ENCODE measurements at regions of chrX and their contacts with region 1.

Region 1: GRCh38 chrX:123833387-123833786 is 26.5 kb upstream of the XIAP start:
- DNase-seq: peak; percentile 63 to 73
- H3K4me3 ChIP-seq: no peak overlapping the region
- H3K4me3 Mint-ChIP-seq: no peak overlapping the region
- H3K27ac Mint-ChIP-seq: no peak overlapping the region
- H3K4me1 ChIP-seq: no peaks in the 10 kb centered on the region
- H3K4me1 Mint-ChIP-seq: peaks cover 6% of the 10 kb centered on the region
- H3K27me3 ChIP-seq: no peaks in the 10 kb centered on the region
- H3K27me3 Mint-ChIP-seq: no peaks in the 10 kb centered on the region
- CTCF ChIP-seq: peak; percentile 52 to 63

Region 2: DNA sequence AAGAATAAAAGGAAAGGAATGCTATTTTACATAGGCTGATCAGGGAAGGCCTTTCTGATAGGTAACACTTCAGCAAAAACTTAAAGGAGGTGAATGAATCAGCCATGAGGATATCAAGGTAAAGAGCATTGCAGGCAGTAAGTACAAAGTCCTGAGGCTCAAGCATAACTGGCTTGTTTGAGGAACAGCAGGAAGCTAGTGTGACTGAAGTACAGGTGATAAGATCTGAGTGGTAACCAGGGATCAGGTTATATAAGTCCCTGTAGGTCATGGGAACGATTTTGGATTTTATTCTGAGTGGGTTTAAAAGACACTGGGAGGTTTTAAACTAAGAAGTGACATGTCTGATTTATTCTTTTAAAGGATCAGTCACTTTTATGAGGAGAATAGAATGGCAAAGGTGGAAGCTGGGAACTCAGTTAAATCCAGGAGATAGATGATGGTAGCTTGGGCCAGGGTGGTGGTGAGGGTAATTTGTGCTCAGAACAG is 53.4 kb before region 1 on chrX:
- CTCF ChIA-PET with region 1: interaction called, 12 read pairs
- POLR2A ChIA-PET with region 1: no interaction called
- intact Hi-C with region 1: no loop called
- DNase-seq: peak; percentile 65 to 71
- H3K4me3 ChIP-seq: no peak overlapping the region
- H3K4me3 Mint-ChIP-seq: peak overlapping the region; percentile 58
- H3K27ac Mint-ChIP-seq: peak overlapping the region; percentile 96
- H3K4me1 ChIP-seq: peaks cover 32% of the 10 kb centered on the region
- H3K4me1 Mint-ChIP-seq: peaks cover 13% of the 10 kb centered on the region
- H3K27me3 ChIP-seq: no peaks in the 10 kb centered on the region
- H3K27me3 Mint-ChIP-seq: no peaks in the 10 kb centered on the region
- CTCF ChIP-seq: no peak

Region 3: GRCh38 chrX:123851079-123851478 is 17.7 kb after region 1 on chrX:
- CTCF ChIA-PET with region 1: no interaction called
- POLR2A ChIA-PET with region 1: no interaction called
- intact Hi-C with region 1: no loop called
- DNase-seq: no peak
- H3K4me3 ChIP-seq: no peak overlapping the region
- H3K4me3 Mint-ChIP-seq: no peak overlapping the region
- H3K27ac Mint-ChIP-seq: no peak overlapping the region
- H3K4me1 ChIP-seq: no peaks in the 10 kb centered on the region
- H3K4me1 Mint-ChIP-seq: peaks cover 8% of the 10 kb centered on the region
- H3K27me3 ChIP-seq: no peaks in the 10 kb centered on the region
- H3K27me3 Mint-ChIP-seq: no peaks in the 10 kb centered on the region
- CTCF ChIP-seq: no peak

Region 4: DNA sequence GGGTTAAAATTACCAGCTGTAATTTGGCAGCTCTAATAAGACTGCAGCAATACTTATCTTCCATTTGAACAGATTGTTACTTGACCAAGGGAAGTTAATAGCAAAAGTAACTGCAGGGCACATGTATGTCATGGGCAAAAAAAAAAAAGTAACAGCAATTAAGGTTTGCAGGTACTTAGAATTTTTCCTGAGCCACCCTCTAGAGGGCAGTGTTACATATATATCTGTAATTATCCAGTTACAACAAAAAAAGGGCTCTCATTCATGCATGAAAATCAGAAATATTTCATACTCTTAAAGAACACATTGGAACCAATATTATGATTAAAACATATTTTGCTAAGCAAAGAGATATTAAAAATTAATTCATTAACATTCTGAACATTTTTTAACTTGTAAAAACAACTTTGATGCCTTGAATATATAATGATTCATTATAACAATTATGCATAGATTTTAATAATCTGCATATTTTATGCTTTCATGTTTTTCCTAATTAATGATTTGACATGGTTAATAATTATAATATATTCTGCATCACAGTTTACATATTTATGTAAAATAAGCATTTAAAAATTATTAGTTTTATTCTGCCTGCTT is 51.5 kb after region 1 on chrX:
- CTCF ChIA-PET with region 1: interaction called, 4 read pairs
- POLR2A ChIA-PET with region 1: no interaction called
- intact Hi-C with region 1: loop called (anchors 1 kb)
- DNase-seq: peak in 1 of 2 experiments; percentile 60
- H3K4me3 ChIP-seq: no peak overlapping the region
- H3K4me3 Mint-ChIP-seq: no peak overlapping the region
- H3K27ac Mint-ChIP-seq: no peak overlapping the region
- H3K4me1 ChIP-seq: no peaks in the 10 kb centered on the region
- H3K4me1 Mint-ChIP-seq: peaks cover 11% of the 10 kb centered on the region
- H3K27me3 ChIP-seq: no peaks in the 10 kb centered on the region
- H3K27me3 Mint-ChIP-seq: no peaks in the 10 kb centered on the region
- CTCF ChIP-seq: peak; percentile 35 to 44

Region 5: DNA sequence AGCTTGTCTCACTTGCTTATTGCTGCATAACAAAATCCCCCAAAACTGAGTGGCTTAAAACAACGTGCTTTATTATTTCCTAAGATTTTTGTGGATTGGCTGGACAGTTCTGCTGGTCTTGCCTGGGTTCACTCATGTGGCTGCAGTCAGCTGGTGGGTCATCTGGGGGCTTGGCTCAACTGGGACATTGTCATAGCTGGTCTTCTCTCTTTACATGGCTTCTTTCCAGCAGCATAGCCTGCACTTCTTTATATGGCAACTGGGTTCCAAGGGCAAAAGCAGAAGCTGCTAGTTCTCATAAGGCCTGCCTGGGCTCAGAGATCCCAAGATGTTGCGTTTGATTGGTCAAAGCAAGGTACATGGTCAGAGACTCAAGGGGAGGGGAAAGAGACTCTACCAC is 94.5 kb after region 1 on chrX:
- CTCF ChIA-PET with region 1: no interaction called
- POLR2A ChIA-PET with region 1: no interaction called
- intact Hi-C with region 1: no loop called
- DNase-seq: no peak
- H3K4me3 ChIP-seq: no peak overlapping the region
- H3K4me3 Mint-ChIP-seq: no peak overlapping the region
- H3K27ac Mint-ChIP-seq: no peak overlapping the region
- H3K4me1 ChIP-seq: no peaks in the 10 kb centered on the region
- H3K4me1 Mint-ChIP-seq: no peaks in the 10 kb centered on the region
- H3K27me3 ChIP-seq: no peaks in the 10 kb centered on the region
- H3K27me3 Mint-ChIP-seq: no peaks in the 10 kb centered on the region
- CTCF ChIP-seq: no peak

Region 6: DNA sequence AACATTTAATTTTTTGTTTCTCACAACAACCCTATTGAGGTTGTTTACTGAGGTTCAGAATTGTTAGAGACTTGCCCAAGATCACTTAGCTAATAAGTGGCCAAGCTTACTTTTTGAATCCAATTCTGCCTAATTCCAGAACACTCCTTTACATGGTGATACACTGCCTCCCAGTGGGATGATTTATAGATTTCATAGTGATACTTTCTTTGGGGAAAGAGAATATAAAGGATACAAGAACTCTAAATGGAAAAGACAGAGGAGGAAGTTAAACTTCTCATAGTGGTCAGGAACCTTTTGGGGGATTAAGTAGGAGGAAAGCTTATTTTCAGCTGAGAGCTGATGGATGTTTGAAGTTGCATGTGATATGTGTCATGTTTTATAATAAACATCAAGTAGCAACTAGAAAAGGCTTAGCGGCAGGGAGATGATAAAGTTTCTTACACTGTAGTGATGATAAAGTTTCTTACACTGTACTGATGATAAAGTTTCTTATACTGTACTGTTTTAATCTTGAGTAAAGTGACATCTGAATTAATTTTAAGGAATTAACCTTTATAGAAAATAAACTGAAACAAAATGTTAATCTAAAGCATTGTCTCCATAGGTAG is 143.4 kb after region 1 on chrX:
- CTCF ChIA-PET with region 1: interaction called, 13 read pairs
- POLR2A ChIA-PET with region 1: no interaction called
- intact Hi-C with region 1: loop called (anchors 1 kb)
- DNase-seq: peak in 1 of 2 experiments; percentile 43
- H3K4me3 ChIP-seq: no peak overlapping the region
- H3K4me3 Mint-ChIP-seq: no peak overlapping the region
- H3K27ac Mint-ChIP-seq: no peak overlapping the region
- H3K4me1 ChIP-seq: no peaks in the 10 kb centered on the region
- H3K4me1 Mint-ChIP-seq: peaks cover 11% of the 10 kb centered on the region
- H3K27me3 ChIP-seq: no peaks in the 10 kb centered on the region
- H3K27me3 Mint-ChIP-seq: no peaks in the 10 kb centered on the region
- CTCF ChIP-seq: peak in 1 of 2 experiments; percentile 12

Region 7: DNA sequence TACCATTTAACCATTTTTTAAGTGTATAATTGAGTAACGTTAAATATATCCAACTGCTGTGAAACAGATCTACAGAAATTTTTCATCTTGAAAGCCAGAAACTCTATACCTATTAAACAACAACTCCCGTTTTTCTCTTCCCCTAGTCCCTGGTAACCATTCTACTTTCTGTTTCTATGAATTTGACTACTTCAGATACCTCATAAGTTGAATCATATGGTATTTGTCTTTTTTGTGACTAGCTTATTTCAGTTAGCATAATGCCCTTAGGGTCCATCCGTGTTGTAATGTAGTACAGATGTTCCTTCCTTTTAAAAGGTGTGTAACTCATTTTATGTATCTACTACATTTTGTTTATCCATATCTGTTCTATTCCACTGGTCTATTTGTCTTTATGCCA is 176.8 kb after region 1 on chrX:
- CTCF ChIA-PET with region 1: no interaction called
- POLR2A ChIA-PET with region 1: no interaction called
- intact Hi-C with region 1: no loop called
- DNase-seq: no peak
- H3K4me3 ChIP-seq: no peak overlapping the region
- H3K4me3 Mint-ChIP-seq: no peak overlapping the region
- H3K27ac Mint-ChIP-seq: no peak overlapping the region
- H3K4me1 ChIP-seq: no peaks in the 10 kb centered on the region
- H3K4me1 Mint-ChIP-seq: no peaks in the 10 kb centered on the region
- H3K27me3 ChIP-seq: no peaks in the 10 kb centered on the region
- H3K27me3 Mint-ChIP-seq: no peaks in the 10 kb centered on the region
- CTCF ChIP-seq: no peak